Colonic mucosa (tissue), 4 donors: ENCODE measurements at regions of chr19 and their contacts with region 1.

Region 1: GRCh38 chr19:35114353-35115176 is 1.1 kb upstream of the FXYD3 start:
- DNase-seq: peak; percentile 86
- H3K4me3 ChIP-seq: peak overlapping the region; percentile 32
- H3K27ac ChIP-seq: peak overlapping the region; percentile 92
- H3K4me1 ChIP-seq: no peaks in the 10 kb centered on the region
- H3K27me3 ChIP-seq: no peaks in the 10 kb centered on the region
- CTCF ChIP-seq: peak; percentile 95

Region 2: GRCh38 chr19:35135389-35135909 is 20.9 kb after region 1 on chr19:
- intact Hi-C with region 1: loop called (anchors 2 kb)
- DNase-seq: peak; percentile 84
- H3K4me3 ChIP-seq: no peak overlapping the region
- H3K27ac ChIP-seq: no peak overlapping the region
- H3K4me1 ChIP-seq: no peaks in the 10 kb centered on the region
- H3K27me3 ChIP-seq: no peaks in the 10 kb centered on the region
- CTCF ChIP-seq: peak; percentile 95

Region 3: DNA sequence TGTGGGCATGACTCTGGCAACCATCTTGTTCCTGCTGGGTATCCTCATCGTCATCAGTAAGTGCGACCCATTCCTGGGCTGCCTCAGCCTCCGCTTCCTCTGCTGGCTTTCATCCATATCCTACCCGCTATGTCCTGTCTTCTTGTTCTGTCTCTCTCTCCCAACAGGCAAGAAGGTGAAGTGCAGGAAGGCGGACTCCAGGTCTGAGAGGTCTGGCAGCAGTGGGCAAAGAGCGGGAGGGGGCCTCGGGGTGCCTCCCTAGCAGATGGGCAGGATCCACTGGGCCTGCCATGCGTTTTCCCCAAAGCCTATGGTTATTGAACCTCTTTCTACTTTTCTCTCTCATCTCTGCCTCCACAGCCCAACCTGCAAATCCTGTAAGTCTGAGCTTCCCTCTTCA is 36.7 kb after region 1 on chr19:
- intact Hi-C with region 1: no loop called
- DNase-seq: no peak
- H3K4me3 ChIP-seq: no peak overlapping the region
- H3K27ac ChIP-seq: no peak overlapping the region
- H3K4me1 ChIP-seq: no peaks in the 10 kb centered on the region
- H3K27me3 ChIP-seq: peaks cover 13% of the 10 kb centered on the region
- CTCF ChIP-seq: no peak

Region 4: GRCh38 chr19:35195830-35196229 is 81.3 kb after region 1 on chr19:
- intact Hi-C with region 1: no loop called
- DNase-seq: no peak
- H3K4me3 ChIP-seq: no peak overlapping the region
- H3K27ac ChIP-seq: no peak overlapping the region
- H3K4me1 ChIP-seq: no peaks in the 10 kb centered on the region
- H3K27me3 ChIP-seq: no peaks in the 10 kb centered on the region
- CTCF ChIP-seq: no peak